MCF 10A (cell line): ENCODE measurements at regions of chr11 and their contacts with region 1.

Region 1: DNA sequence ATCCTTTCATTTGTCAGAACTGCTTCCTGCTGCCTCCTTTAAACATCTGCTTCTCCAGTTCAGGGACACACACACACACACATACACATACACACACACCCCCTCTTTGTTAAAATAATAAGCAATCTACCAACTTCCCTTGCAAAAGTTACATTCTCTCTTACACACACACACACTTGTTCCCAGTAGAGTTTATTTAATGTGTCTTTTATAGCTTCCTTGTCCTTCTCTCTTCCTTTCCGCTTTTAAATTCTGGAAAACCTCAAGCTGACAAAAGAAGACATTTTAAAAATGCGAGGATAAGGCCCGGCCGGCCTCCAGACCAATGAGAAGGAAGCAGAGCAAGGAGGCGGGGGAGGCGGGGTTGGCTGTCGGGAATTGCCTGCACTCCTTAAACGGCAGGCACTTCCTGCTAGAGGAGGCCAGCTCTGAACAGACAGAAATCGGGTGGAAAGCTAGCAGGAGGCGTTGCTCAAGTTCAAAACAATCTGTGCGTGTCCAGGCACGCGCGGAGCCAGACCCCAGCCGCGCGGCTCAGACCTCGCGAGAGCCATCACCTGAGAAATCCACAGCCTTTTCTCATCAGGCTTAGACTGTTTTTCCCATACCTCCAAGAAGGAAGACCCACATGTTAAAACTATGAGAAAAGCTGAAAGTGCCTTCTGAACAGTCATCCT is 99.9 kb downstream of the MAML2 start:
- DNase-seq: peak; percentile 97
- H3K4me3 Mint-ChIP-seq: peak overlapping the region; percentile 72
- H3K27ac Mint-ChIP-seq: peak overlapping the region; percentile 83
- H3K4me1 Mint-ChIP-seq: peaks cover 32% of the 10 kb centered on the region
- H3K27me3 Mint-ChIP-seq: no peaks in the 10 kb centered on the region
- CTCF ChIP-seq: no peak

Region 2: GRCh38 chr11:95835768-95836488 is 407.2 kb before region 1 on chr11:
- CTCF ChIA-PET with region 1: interaction called, 9 read pairs
- POLR2A ChIA-PET with region 1: no interaction called
- intact Hi-C with region 1: loop called (anchors 2 kb)
- DNase-seq: peak; percentile 89
- H3K4me3 Mint-ChIP-seq: no peak overlapping the region
- H3K27ac Mint-ChIP-seq: peak overlapping the region; percentile 17
- H3K4me1 Mint-ChIP-seq: peaks cover 11% of the 10 kb centered on the region
- H3K27me3 Mint-ChIP-seq: no peaks in the 10 kb centered on the region
- CTCF ChIP-seq: peak; percentile 72

Region 3: GRCh38 chr11:95948637-95949036 is 294.5 kb before region 1 on chr11:
- CTCF ChIA-PET with region 1: no interaction called
- POLR2A ChIA-PET with region 1: no interaction called
- intact Hi-C with region 1: no loop called
- DNase-seq: no peak
- H3K4me3 Mint-ChIP-seq: no peak overlapping the region
- H3K27ac Mint-ChIP-seq: no peak overlapping the region
- H3K4me1 Mint-ChIP-seq: no peaks in the 10 kb centered on the region
- H3K27me3 Mint-ChIP-seq: no peaks in the 10 kb centered on the region
- CTCF ChIP-seq: no peak

Region 4: GRCh38 chr11:96180341-96180740 is 62.8 kb before region 1 on chr11:
- CTCF ChIA-PET with region 1: no interaction called
- POLR2A ChIA-PET with region 1: no interaction called
- intact Hi-C with region 1: no loop called
- DNase-seq: no peak
- H3K4me3 Mint-ChIP-seq: no peak overlapping the region
- H3K27ac Mint-ChIP-seq: no peak overlapping the region
- H3K4me1 Mint-ChIP-seq: peaks cover 13% of the 10 kb centered on the region
- H3K27me3 Mint-ChIP-seq: no peaks in the 10 kb centered on the region
- CTCF ChIP-seq: no peak

Region 5: DNA sequence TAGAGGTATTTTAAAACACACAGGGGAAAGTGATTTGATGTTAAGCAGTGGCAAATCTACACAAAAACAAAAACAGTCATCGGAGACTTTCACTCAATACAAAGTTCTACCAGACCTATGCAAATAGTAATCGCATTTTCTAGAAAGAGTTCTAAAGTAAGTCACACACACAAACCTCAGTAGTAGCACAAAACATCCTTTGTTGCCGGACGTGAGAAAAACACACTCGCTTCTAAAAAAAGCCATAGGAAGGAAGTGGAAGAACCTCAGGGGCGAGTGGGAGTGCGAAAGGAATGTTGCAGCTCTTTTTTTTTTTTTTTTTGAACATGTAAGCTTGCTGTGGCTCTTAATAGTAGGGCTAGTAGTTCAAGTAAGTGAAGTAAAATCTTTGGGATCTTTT is 11.0 kb after region 1 on chr11:
- CTCF ChIA-PET with region 1: interaction called, 4 read pairs
- POLR2A ChIA-PET with region 1: interaction called, 10 read pairs
- intact Hi-C with region 1: no loop called
- DNase-seq: no peak
- H3K4me3 Mint-ChIP-seq: peak overlapping the region; percentile 46
- H3K27ac Mint-ChIP-seq: peak overlapping the region; percentile 72
- H3K4me1 Mint-ChIP-seq: peaks cover 47% of the 10 kb centered on the region
- H3K27me3 Mint-ChIP-seq: no peaks in the 10 kb centered on the region
- CTCF ChIP-seq: no peak

Region 6: GRCh38 chr11:96267496-96268032 is 24.5 kb after region 1 on chr11:
- CTCF ChIA-PET with region 1: interaction called, 3 read pairs
- POLR2A ChIA-PET with region 1: interaction called, 19 read pairs
- intact Hi-C with region 1: no loop called
- DNase-seq: no peak
- H3K4me3 Mint-ChIP-seq: no peak overlapping the region
- H3K27ac Mint-ChIP-seq: peak overlapping the region; percentile 96
- H3K4me1 Mint-ChIP-seq: peaks cover 30% of the 10 kb centered on the region
- H3K27me3 Mint-ChIP-seq: no peaks in the 10 kb centered on the region
- CTCF ChIP-seq: no peak

Region 7: GRCh38 chr11:96306933-96307775 is 64.0 kb after region 1 on chr11:
- CTCF ChIA-PET with region 1: interaction called, 7 read pairs
- POLR2A ChIA-PET with region 1: interaction called, 54 read pairs
- intact Hi-C with region 1: loop called (anchors 1 kb)
- DNase-seq: peak; percentile 100
- H3K4me3 Mint-ChIP-seq: peak overlapping the region; percentile 68
- H3K27ac Mint-ChIP-seq: peak overlapping the region; percentile 97
- H3K4me1 Mint-ChIP-seq: peaks cover 59% of the 10 kb centered on the region
- H3K27me3 Mint-ChIP-seq: no peaks in the 10 kb centered on the region
- CTCF ChIP-seq: no peak